B cell (primary cell): ENCODE measurements at regions of chr12 and their contacts with region 1.

Region 1: GRCh38 chr12:120086801-120087621 is 29.5 kb downstream of the RAB35 start:
- DNase-seq: peak; percentile 100
- ATAC-seq: peak; percentile 91
- H3K4me3 ChIP-seq: peak overlapping the region; percentile 26 to 63 (median 43)
- H3K4me3 Mint-ChIP-seq: peak overlapping the region; percentile 81
- H3K27ac ChIP-seq: peak overlapping the region; percentile 43 to 49
- H3K27ac Mint-ChIP-seq: peak overlapping the region; percentile 88
- H3K4me1 ChIP-seq: peaks cover 9 to 13% of the 10 kb centered on the region in 2 donors
- H3K4me1 Mint-ChIP-seq: peaks cover 16% of the 10 kb centered on the region
- H3K27me3 ChIP-seq: no peaks in the 10 kb centered on the region
- H3K27me3 Mint-ChIP-seq: no peaks in the 10 kb centered on the region
- CTCF ChIP-seq: peak; percentile 98

Region 2: GRCh38 chr12:119667577-119668323 is 419.3 kb before region 1 on chr12 and contains the start of gene PRKAB1:
- CTCF ChIA-PET with region 1: no interaction called
- POLR2A ChIA-PET with region 1: no interaction called
- intact Hi-C with region 1: loop called (anchors 1 kb)
- DNase-seq: peak; percentile 99
- ATAC-seq: peak; percentile 94
- H3K4me3 ChIP-seq: peak within 1 kb of the TSS; percentile 80 to 95 (median 89)
- H3K4me3 Mint-ChIP-seq: peak within 1 kb of the TSS; percentile 87
- H3K27ac ChIP-seq: peak within 1 kb of the TSS; percentile 80 to 92
- H3K27ac Mint-ChIP-seq: peak within 1 kb of the TSS; percentile 92
- H3K4me1 ChIP-seq: peaks cover 28 to 36% of the 10 kb centered on the region in 2 donors
- H3K4me1 Mint-ChIP-seq: peaks cover 51% of the 10 kb centered on the region
- H3K27me3 ChIP-seq: no peaks in the 10 kb centered on the region
- H3K27me3 Mint-ChIP-seq: no peaks in the 10 kb centered on the region
- CTCF ChIP-seq: peak; percentile 95
- total RNA-seq, gene PRKAB1: 56.4 and 59.6 TPM in 2 replicates

Region 3: GRCh38 chr12:119835068-119835467 is 251.9 kb before region 1 on chr12:
- CTCF ChIA-PET with region 1: no interaction called
- POLR2A ChIA-PET with region 1: no interaction called
- intact Hi-C with region 1: no loop called
- DNase-seq: no peak
- ATAC-seq: no peak
- H3K4me3 ChIP-seq: no peak overlapping the region
- H3K4me3 Mint-ChIP-seq: no peak overlapping the region
- H3K27ac ChIP-seq: no peak overlapping the region
- H3K27ac Mint-ChIP-seq: no peak overlapping the region
- H3K4me1 ChIP-seq: peaks cover 0 to 6% of the 10 kb centered on the region in 2 donors
- H3K4me1 Mint-ChIP-seq: peaks cover 3% of the 10 kb centered on the region
- H3K27me3 ChIP-seq: no peaks in the 10 kb centered on the region
- H3K27me3 Mint-ChIP-seq: no peaks in the 10 kb centered on the region
- CTCF ChIP-seq: no peak

Region 4: GRCh38 chr12:119938049-119938667 is 148.9 kb before region 1 on chr12:
- CTCF ChIA-PET with region 1: interaction called, 11 read pairs
- POLR2A ChIA-PET with region 1: no interaction called
- intact Hi-C with region 1: loop called (anchors 1 kb)
- DNase-seq: peak; percentile 71
- ATAC-seq: peak; percentile 61
- H3K4me3 ChIP-seq: no peak overlapping the region
- H3K4me3 Mint-ChIP-seq: no peak overlapping the region
- H3K27ac ChIP-seq: no peak overlapping the region
- H3K27ac Mint-ChIP-seq: no peak overlapping the region
- H3K4me1 ChIP-seq: no peaks in the 10 kb centered on the region
- H3K4me1 Mint-ChIP-seq: no peaks in the 10 kb centered on the region
- H3K27me3 ChIP-seq: no peaks in the 10 kb centered on the region
- H3K27me3 Mint-ChIP-seq: peaks cover 7% of the 10 kb centered on the region
- CTCF ChIP-seq: peak; percentile 89

Region 5: DNA sequence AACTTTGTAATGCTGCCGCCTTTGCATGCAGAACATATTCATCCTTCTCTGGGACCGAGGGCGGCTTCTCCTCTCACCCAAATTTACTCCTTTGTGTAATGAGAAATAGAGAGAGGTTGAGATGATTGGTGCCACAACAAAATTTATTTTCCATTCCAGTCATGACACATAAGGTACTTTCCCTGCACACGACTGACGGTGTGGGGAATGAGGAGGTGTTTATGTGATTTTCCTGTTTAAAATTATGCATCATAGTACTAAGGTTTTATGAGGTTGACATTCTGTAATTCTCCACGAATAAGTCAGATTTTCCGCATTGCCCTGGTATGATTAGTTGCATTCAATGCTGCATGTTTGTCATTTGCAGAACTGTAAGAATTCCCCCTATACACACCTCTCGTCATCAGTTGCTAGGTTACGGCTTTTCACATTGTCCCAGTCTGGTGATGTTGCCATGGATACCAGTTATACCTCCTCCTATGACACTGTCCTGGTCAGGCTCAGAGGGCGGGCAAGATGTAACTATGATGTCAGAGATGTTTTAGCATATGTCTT is 74.9 kb before region 1 on chr12:
- CTCF ChIA-PET with region 1: interaction called, 3 read pairs
- POLR2A ChIA-PET with region 1: no interaction called
- intact Hi-C with region 1: loop called (anchors 1 kb)
- DNase-seq: peak; percentile 79
- ATAC-seq: peak; percentile 76
- H3K4me3 ChIP-seq: no peak overlapping the region
- H3K4me3 Mint-ChIP-seq: peak overlapping the region; percentile 51
- H3K27ac ChIP-seq: no peak overlapping the region
- H3K27ac Mint-ChIP-seq: peak overlapping the region; percentile 82
- H3K4me1 ChIP-seq: peaks cover 7 to 20% of the 10 kb centered on the region in 2 donors
- H3K4me1 Mint-ChIP-seq: peaks cover 48% of the 10 kb centered on the region
- H3K27me3 ChIP-seq: no peaks in the 10 kb centered on the region
- H3K27me3 Mint-ChIP-seq: no peaks in the 10 kb centered on the region
- CTCF ChIP-seq: no peak

Region 6: DNA sequence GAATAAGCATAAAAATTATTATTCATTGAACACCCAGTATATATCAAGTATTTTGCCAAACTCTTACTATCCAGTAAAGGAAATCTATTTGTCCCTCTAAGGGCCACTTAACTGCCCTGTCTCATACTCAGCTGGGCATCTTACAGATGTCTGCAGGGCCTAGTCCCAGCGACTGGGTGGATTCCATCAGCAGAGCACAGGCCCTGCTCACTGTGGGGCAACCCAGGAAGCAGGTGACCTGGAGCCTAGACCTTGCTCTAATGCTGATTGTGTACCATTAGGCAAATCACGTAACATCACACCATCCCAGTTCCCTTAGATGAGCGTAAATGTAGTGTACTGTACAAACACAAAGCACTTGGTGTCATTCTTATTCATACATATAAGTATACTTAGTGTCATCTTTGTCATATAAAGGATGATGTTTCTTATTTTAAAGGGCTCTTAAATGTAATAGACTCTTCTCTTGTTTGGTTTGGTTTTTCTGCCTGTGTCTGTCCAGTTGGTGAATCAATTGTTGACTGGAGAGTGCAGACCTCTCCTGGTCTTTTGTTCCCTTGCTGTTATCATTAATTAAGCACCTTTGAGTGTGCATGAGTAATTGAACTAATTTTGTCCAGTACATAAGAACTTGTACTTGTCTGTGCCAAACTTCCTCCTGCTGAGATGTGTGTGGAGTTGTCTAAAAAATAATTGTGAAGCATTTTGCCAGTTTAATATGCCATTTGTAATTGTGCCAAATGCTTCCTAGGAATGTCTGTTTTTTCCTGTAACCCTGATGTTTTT is 19.7 kb before region 1 on chr12:
- CTCF ChIA-PET with region 1: no interaction called
- POLR2A ChIA-PET with region 1: no interaction called
- intact Hi-C with region 1: no loop called
- DNase-seq: no peak
- ATAC-seq: no peak
- H3K4me3 ChIP-seq: no peak overlapping the region
- H3K4me3 Mint-ChIP-seq: no peak overlapping the region
- H3K27ac ChIP-seq: no peak overlapping the region
- H3K27ac Mint-ChIP-seq: no peak overlapping the region
- H3K4me1 ChIP-seq: no peaks in the 10 kb centered on the region
- H3K4me1 Mint-ChIP-seq: no peaks in the 10 kb centered on the region
- H3K27me3 ChIP-seq: no peaks in the 10 kb centered on the region
- H3K27me3 Mint-ChIP-seq: no peaks in the 10 kb centered on the region
- CTCF ChIP-seq: no peak

Region 7: GRCh38 chr12:120116792-120117651 is 30.0 kb after region 1 on chr12:
- CTCF ChIA-PET with region 1: interaction called, 12 read pairs
- POLR2A ChIA-PET with region 1: no interaction called
- intact Hi-C with region 1: loop called (anchors 1 kb)
- DNase-seq: peak; percentile 98
- ATAC-seq: peak; percentile 81
- H3K4me3 ChIP-seq: peak overlapping the region; percentile 61 to 92 (median 85)
- H3K4me3 Mint-ChIP-seq: peak overlapping the region; percentile 87
- H3K27ac ChIP-seq: peak overlapping the region; percentile 66 to 80
- H3K27ac Mint-ChIP-seq: peak overlapping the region; percentile 86
- H3K4me1 ChIP-seq: peaks cover 43 to 62% of the 10 kb centered on the region in 2 donors
- H3K4me1 Mint-ChIP-seq: peaks cover 74% of the 10 kb centered on the region
- H3K27me3 ChIP-seq: no peaks in the 10 kb centered on the region
- H3K27me3 Mint-ChIP-seq: no peaks in the 10 kb centered on the region
- CTCF ChIP-seq: no peak

Region 8: GRCh38 chr12:120150919-120151525 is 64.0 kb after region 1 on chr12:
- CTCF ChIA-PET with region 1: no interaction called
- POLR2A ChIA-PET with region 1: no interaction called
- intact Hi-C with region 1: no loop called
- DNase-seq: no peak
- ATAC-seq: no peak
- H3K4me3 ChIP-seq: no peak overlapping the region
- H3K4me3 Mint-ChIP-seq: no peak overlapping the region
- H3K27ac ChIP-seq: no peak overlapping the region
- H3K27ac Mint-ChIP-seq: no peak overlapping the region
- H3K4me1 ChIP-seq: no peaks in the 10 kb centered on the region
- H3K4me1 Mint-ChIP-seq: no peaks in the 10 kb centered on the region
- H3K27me3 ChIP-seq: no peaks in the 10 kb centered on the region
- H3K27me3 Mint-ChIP-seq: no peaks in the 10 kb centered on the region
- CTCF ChIP-seq: no peak

Region 9: GRCh38 chr12:120292661-120293531 is 205.9 kb after region 1 on chr12 and contains the start of gene RNU4-1:
- CTCF ChIA-PET with region 1: no interaction called
- POLR2A ChIA-PET with region 1: interaction called, 12 read pairs
- intact Hi-C with region 1: loop called (anchors 1 kb)
- DNase-seq: peak; percentile 94
- ATAC-seq: peak; percentile 59
- H3K4me3 ChIP-seq: peak within 1 kb of the TSS; percentile 61 to 87 (median 82)
- H3K4me3 Mint-ChIP-seq: no peak within 1 kb of the TSS
- H3K27ac ChIP-seq: peak within 1 kb of the TSS; percentile 99
- H3K27ac Mint-ChIP-seq: no peak within 1 kb of the TSS
- H3K4me1 ChIP-seq: peaks cover 14 to 20% of the 10 kb centered on the region in 2 donors
- H3K4me1 Mint-ChIP-seq: peaks cover 13% of the 10 kb centered on the region
- H3K27me3 ChIP-seq: no peaks in the 10 kb centered on the region
- H3K27me3 Mint-ChIP-seq: no peaks in the 10 kb centered on the region
- CTCF ChIP-seq: no peak
- total RNA-seq, gene RNU4-1: 3,269 and 3,426 TPM in 2 replicates